ENCODE measurements at regions of chr9 and their contacts with region 1.

Region 1: GRCh38 chr9:98263482-98264357 is 8.3 kb upstream of the TBC1D2 start:
- DNase-seq: no peak
- H3K4me3 ChIP-seq: no peak overlapping the region
- H3K27ac ChIP-seq: no peak overlapping the region
- H3K4me1 ChIP-seq: no peaks in the 10 kb centered on the region
- H3K27me3 ChIP-seq: no peaks in the 10 kb centered on the region
- CTCF ChIP-seq: peak; percentile 81 to 92 (median 89)
- EP300 ChIP-seq: no peak
- POLR2A ChIP-seq: no peak

Region 2: GRCh38 chr9:97921959-97922724 is 341.6 kb before region 1 on chr9 and contains the start of gene TRMO:
- intact Hi-C with region 1: loop called (anchors 5 kb)
- DNase-seq: peak; percentile 100
- H3K4me3 ChIP-seq: peak within 1 kb of the TSS; percentile 69 to 81 (median 72)
- H3K27ac ChIP-seq: peak within 1 kb of the TSS; percentile 95 to 99 (median 96)
- H3K4me1 ChIP-seq: peaks cover 16 to 47% (median 27%) of the 10 kb centered on the region in 4 donors
- H3K27me3 ChIP-seq: peaks cover 0 to 7% (median 0%) of the 10 kb centered on the region in 4 donors
- CTCF ChIP-seq: peak; percentile 58 to 75 (median 64)
- EP300 ChIP-seq: no peak
- POLR2A ChIP-seq: peak; percentile 64
- total RNA-seq, gene TRMO: 16.6 to 22.7 (median 18.8) TPM

Region 3: GRCh38 chr9:98074115-98074990 is 189.4 kb before region 1 on chr9:
- intact Hi-C with region 1: loop called (anchors 2 kb)
- DNase-seq: no peak
- H3K4me3 ChIP-seq: no peak overlapping the region
- H3K27ac ChIP-seq: peak overlapping the region in 3 of 4 donors; percentile 15 to 32 (median 24)
- H3K4me1 ChIP-seq: peaks cover 6 to 20% (median 10%) of the 10 kb centered on the region in 4 donors
- H3K27me3 ChIP-seq: no peaks in the 10 kb centered on the region
- CTCF ChIP-seq: peak; percentile 72 to 92 (median 80)
- EP300 ChIP-seq: no peak
- POLR2A ChIP-seq: no peak

Region 4: GRCh38 chr9:98201102-98201501 is 62.6 kb before region 1 on chr9:
- intact Hi-C with region 1: loop called (anchors 1 kb)
- DNase-seq: no peak
- H3K4me3 ChIP-seq: no peak overlapping the region
- H3K27ac ChIP-seq: no peak overlapping the region
- H3K4me1 ChIP-seq: peaks cover 0 to 8% (median 7%) of the 10 kb centered on the region in 4 donors
- H3K27me3 ChIP-seq: no peaks in the 10 kb centered on the region
- CTCF ChIP-seq: no peak
- EP300 ChIP-seq: no peak
- POLR2A ChIP-seq: no peak

Region 5: GRCh38 chr9:98333703-98334582 is 70.2 kb after region 1 on chr9:
- intact Hi-C with region 1: no loop called
- DNase-seq: no peak
- H3K4me3 ChIP-seq: no peak overlapping the region
- H3K27ac ChIP-seq: no peak overlapping the region
- H3K4me1 ChIP-seq: peaks cover 0 to 5% (median 0%) of the 10 kb centered on the region in 4 donors
- H3K27me3 ChIP-seq: no peaks in the 10 kb centered on the region
- CTCF ChIP-seq: no peak
- EP300 ChIP-seq: no peak
- POLR2A ChIP-seq: no peak